ENCODE measurements at regions of chr4 and their contacts with region 1.

Region 1: GRCh38 chr4:89894649-89895550 is at the start of gene MMRN1:
- DNase-seq: no peak
- ATAC-seq: no peak
- total RNA-seq, gene MMRN1: 2.3 TPM

Region 2: DNA sequence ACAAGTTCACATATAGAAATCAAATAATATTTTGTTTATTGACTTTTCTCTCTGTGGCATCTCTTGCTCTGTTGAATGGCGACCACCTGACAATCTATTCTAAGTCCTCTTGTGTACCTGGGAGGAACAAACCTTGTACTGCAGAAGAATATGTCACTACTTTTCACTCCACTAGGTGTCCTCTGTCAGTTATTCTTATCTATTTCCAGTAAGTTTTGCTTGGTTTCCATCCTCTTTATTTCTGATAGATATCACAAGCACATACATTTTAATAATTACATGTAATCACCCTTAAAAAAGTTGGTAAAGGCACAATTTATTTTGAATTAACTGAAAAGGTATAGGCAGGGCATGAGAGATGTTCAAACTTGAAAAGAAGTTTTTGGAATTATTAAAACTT is 296.3 kb before region 1 on chr4:
- intact Hi-C with region 1: loop called (anchors 5 kb)
- DNase-seq: no peak
- ATAC-seq: no peak

Region 3: GRCh38 chr4:89661490-89661889 is 233.4 kb before region 1 on chr4:
- intact Hi-C with region 1: loop called (anchors 10 kb)
- DNase-seq: no peak
- ATAC-seq: no peak

Measured in Right ventricle myocardium superior (tissue), 1 donor.